Lower leg skin (tissue), 4 donors: ENCODE measurements at regions of chr2 and their contacts with region 1.

Region 1: GRCh38 chr2:26244309-26245121 is at the starts of genes HADHA and HADHB:
- DNase-seq: peak; percentile 85 to 98
- H3K4me3 ChIP-seq: peak within 1 kb of the TSS; percentile 84
- CTCF ChIP-seq: peak in 1 of 3 donors; percentile 42
- POLR2A ChIP-seq: peak in 1 of 2 donors; percentile 18
- total RNA-seq, gene HADHA: 125 to 170 (median 131) TPM
- total RNA-seq, gene HADHB: 101 to 139 (median 111) TPM

Region 2: GRCh38 chr2:24816884-24817283 is 1427.6 kb before region 1 on chr2:
- intact Hi-C with region 1: no loop called
- DNase-seq: no peak
- H3K4me3 ChIP-seq: no peak overlapping the region
- CTCF ChIP-seq: no peak
- POLR2A ChIP-seq: no peak

Region 3: DNA sequence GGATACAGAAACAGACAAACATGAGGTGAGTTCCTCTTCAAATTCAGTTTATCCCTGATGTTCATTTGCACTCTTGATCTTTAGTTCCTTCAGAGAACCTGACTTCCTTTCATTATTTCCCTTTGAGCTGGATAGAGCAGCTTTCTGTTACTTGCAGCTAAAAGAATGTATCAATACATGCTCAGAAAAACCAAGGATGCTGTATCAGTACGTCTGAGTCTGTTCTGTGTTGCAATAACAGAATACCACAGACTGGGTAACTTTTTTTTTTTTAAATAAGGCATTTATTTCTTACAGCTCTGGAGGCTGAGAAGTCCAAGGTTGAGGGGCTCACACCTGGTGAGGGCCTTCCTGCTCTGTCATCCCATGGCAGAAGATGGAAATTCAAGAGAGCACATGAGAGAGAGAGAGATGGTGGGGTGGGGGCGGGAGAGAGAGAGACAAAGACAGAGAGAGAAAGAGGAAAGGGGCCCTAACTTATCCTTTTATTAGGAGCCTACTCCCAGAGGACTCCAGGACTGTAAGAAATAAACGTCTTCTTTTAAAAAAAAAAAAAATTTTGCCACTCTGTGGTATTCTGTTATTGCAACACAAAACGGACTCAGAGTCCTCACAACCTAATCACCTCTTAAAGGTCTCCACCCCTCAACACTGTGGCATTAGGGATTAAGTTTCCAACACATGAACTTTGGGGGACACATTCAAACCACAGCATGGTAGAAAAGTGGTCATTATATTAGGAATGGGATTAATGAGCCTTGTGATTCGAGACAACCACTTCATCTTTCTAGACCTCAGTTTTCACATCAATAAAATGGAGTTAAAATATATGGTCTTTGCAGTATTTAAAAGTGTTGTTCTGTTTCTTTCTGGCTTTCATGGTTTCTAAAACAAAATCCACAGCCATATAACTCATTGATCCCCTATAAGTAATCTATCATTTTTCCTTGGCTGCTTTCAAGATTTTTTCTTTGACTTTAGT is 83.1 kb after region 1 on chr2:
- intact Hi-C with region 1: loop called (anchors 10 kb)
- DNase-seq: no peak
- H3K4me3 ChIP-seq: no peak overlapping the region
- CTCF ChIP-seq: no peak
- POLR2A ChIP-seq: no peak